AG04449 (cell line): ENCODE measurements at regions of chr19 and their contacts with region 1.

Region 1: GRCh38 chr19:48993175-48994034 is at the starts of genes GYS1 and RUVBL2:
- DNase-seq: peak; percentile 99
- H3K4me3 ChIP-seq: peak within 1 kb of the TSS; percentile 97
- CTCF ChIP-seq: peak; percentile 99

Region 2: DNA sequence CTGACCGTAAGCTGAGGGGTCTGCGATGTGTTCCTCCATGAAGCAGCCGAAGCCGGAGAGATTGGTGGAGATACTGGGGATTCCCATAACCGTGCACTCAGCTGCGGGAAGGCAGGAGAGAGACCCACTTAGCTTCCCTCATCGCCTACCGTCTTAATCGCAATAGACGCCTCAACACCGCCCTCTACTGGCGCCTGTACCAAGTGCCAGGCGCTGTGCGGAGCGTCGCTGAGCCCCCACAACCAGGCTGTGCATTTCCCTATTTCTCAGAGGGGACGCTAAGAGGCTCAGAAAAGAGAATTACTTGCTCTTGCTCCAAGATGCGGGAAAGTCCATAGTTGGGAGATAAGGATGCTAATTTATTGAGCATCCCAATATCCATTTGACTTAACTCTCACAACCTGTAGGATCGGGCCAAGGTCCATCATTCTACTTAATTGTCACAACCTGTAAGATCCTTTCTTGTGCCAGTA is 22.4 kb before region 1 on chr19:
- CTCF ChIA-PET with region 1: interaction called, 128 read pairs
- POLR2A ChIA-PET with region 1: interaction called, 6 read pairs
- DNase-seq: no peak
- H3K4me3 ChIP-seq: no peak overlapping the region
- CTCF ChIP-seq: peak; percentile 94

Region 3: DNA sequence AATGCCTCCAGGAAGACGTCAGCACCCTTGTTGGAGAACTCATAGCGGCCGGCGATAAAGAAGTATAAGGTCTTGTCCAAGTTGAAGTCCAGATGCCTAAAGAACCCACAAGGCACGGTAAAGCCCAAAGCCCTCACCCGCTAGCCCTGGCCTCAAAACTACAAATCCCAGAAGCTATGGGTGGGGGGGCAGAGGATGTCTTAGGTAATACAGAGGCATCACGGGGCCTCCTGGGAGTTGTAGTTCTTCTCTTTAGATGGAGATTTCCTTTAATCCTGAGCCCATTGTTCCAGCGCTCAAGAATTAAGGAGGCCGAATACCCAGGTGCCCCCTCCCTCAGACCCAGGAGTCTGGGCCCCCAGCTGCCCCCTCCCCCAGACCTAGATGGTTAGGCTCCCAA is 11.1 kb before region 1 on chr19:
- CTCF ChIA-PET with region 1: interaction called, 128 read pairs
- POLR2A ChIA-PET with region 1: interaction called, 10 read pairs
- DNase-seq: no peak
- H3K4me3 ChIP-seq: no peak overlapping the region
- CTCF ChIP-seq: no peak

Region 4: DNA sequence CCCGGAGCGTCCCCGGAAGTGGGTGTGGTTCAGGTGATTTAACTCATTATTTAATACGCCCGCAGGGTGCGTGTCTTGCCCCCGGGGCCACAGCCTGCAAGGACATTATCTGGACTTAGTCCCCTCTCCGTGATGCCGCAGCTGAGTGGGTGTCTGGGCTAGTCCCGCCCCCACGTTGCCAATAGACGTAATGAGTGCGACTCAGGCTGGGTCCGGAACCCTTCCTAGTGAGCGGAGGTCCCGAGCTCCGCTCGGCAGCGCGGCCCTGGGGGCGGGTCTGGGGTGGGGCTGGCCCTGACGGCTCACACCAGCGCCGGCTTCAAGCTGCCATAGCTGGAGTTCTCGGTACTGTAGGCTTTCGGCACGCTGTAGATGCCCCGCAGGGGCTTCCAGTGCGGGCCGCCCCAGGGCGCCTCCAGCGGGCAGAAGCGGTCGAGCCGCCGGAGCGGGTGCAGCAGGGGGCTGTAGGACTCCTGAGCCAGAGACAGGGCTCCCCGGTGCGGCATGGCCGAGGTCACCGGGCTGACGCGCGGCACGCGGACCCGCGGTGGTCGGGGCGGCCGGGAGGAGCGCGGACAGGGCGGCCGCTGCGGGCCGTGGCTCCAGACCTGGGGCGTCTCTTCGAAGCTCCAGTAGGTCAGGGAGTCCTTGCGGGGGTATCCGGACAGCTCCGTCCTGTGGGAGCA is 24.4 kb after region 1 on chr19:
- CTCF ChIA-PET with region 1: interaction called, 146 read pairs
- POLR2A ChIA-PET with region 1: interaction called, 3 read pairs
- DNase-seq: no peak
- H3K4me3 ChIP-seq: peak overlapping the region; percentile 50
- CTCF ChIP-seq: peak; percentile 74

Region 5: DNA sequence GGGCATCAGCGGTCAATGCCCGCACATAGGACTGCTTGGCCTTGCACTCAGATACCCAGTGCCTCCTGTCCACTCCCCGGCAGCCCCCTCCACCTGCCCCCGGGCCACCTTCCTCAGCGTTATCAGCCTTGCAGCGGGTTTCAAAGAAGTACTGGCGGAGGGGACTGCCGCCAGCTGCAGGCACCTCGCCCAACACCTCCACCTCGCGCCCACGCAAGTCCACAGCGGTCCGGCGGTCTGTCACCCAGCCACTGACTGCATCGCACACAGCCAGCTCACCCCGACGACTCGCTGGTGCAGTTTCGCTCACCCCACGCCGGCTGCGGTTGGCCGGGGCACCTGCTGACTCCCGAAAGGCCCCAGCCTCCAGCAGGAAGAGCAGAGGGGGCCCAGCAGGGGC is 68.0 kb after region 1 on chr19:
- CTCF ChIA-PET with region 1: interaction called, 46 read pairs
- POLR2A ChIA-PET with region 1: interaction called, 6 read pairs
- DNase-seq: no peak
- H3K4me3 ChIP-seq: no peak overlapping the region
- CTCF ChIP-seq: no peak